Endothelial cell of umbilical vein (primary cell): ENCODE measurements at regions of chr4 and their contacts with region 1.

Region 1: GRCh38 chr4:128809477-128810330 is at the start of gene JADE1:
- DNase-seq: peak; percentile 95
- H3K4me3 ChIP-seq: peak within 1 kb of the TSS; percentile 77 to 98 (median 94)
- H3K27ac ChIP-seq: peak within 1 kb of the TSS; percentile 93
- H3K4me1 ChIP-seq: peaks cover 7% of the 10 kb centered on the region
- H3K27me3 ChIP-seq: no peaks in the 10 kb centered on the region
- CTCF ChIP-seq: peak; percentile 65 to 72
- POLR2A ChIP-seq: no peak
- total RNA-seq, gene JADE1: 39.2 and 45.6 TPM in 2 replicates

Region 2: DNA sequence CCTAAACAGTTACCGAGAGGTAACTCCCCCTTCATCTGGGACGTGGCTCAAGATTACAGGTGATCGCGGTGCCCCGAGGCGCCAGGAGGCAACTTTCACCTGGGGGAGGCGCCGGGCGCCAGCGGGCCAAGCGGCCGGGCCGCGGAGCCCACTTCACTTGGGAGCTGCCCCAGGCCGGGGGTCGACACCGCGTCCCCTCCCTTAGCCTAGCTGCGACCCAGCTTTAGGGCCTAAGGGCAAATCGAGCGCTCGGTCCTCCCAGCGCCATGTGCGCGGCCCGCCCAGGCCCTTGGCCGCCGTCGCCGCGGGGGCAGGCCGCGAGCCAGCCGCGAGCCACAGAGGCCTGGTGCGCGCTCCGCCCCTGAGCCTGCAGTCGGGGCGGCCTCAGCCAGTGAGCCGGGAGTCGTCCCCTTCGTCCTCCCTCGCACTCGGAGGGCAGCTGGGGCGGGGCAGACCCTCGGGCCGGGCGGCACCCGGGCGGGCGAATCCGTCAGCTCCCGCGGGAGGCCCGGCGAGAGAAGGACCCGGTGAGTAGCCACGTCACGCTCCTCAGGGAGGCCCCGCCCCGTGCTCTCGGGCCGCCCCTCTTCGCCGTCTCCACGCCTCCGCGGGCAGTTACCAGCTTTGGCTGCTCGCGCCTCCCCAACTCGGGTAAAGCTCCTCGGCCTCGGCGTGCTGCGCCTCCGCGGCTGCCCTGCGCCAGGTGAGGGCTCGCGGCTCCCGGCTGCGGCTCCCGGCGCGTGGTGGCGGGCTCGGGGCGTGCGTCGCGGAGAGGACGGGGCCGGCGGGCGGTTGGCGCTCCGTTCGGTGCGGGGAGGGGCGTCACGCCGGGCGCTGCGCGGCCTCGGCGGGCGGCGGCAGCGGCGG is 748.8 kb before region 1 on chr4 and contains the start of gene LARP1B:
- CTCF ChIA-PET with region 1: no interaction called
- POLR2A ChIA-PET with region 1: interaction called, 3 read pairs
- dilution Hi-C with region 1: no loop called
- intact Hi-C with region 1: loop called (anchors 5 kb)
- DNase-seq: peak; percentile 97
- H3K4me3 ChIP-seq: peak within 1 kb of the TSS; percentile 74 to 86 (median 86)
- H3K27ac ChIP-seq: peak within 1 kb of the TSS; percentile 87
- H3K4me1 ChIP-seq: peaks cover 10% of the 10 kb centered on the region
- H3K27me3 ChIP-seq: no peaks in the 10 kb centered on the region
- CTCF ChIP-seq: no peak
- POLR2A ChIP-seq: peak; percentile 94
- total RNA-seq, gene LARP1B: 27.7 and 28.8 TPM in 2 replicates

Region 3: DNA sequence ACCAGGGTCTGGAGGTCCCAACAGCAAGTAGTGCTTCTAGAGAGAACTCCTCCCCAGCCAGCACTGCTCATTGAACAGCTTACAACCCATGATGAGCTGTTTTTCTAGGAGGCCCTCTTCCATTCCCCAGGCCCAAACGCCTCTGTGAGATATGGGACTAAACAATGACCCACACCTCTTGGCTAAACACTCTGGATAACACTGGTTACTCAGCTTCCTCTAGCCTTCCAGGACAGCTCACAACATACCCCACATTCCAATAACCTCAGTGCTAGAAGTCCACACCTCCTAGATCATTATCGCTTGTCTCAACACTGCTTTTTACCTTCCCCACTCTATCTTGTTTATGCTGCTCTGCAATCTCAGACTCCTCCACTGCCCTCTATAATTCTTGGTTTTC is 486.7 kb before region 1 on chr4:
- CTCF ChIA-PET with region 1: no interaction called
- POLR2A ChIA-PET with region 1: no interaction called
- dilution Hi-C with region 1: no loop called
- intact Hi-C with region 1: loop called (anchors 1 kb)
- DNase-seq: peak; percentile 91
- H3K4me3 ChIP-seq: no peak overlapping the region
- H3K27ac ChIP-seq: peak overlapping the region; percentile 96
- H3K4me1 ChIP-seq: peaks cover 31% of the 10 kb centered on the region
- H3K27me3 ChIP-seq: no peaks in the 10 kb centered on the region
- CTCF ChIP-seq: no peak
- POLR2A ChIP-seq: peak; percentile 74

Region 4: GRCh38 chr4:128386761-128387599 is 422.7 kb before region 1 on chr4:
- CTCF ChIA-PET with region 1: interaction called, 4 read pairs
- POLR2A ChIA-PET with region 1: no interaction called
- dilution Hi-C with region 1: no loop called
- intact Hi-C with region 1: loop called (anchors 2 kb)
- DNase-seq: peak; percentile 94
- H3K4me3 ChIP-seq: no peak overlapping the region
- H3K27ac ChIP-seq: peak overlapping the region; percentile 34
- H3K4me1 ChIP-seq: peaks cover 15% of the 10 kb centered on the region
- H3K27me3 ChIP-seq: no peaks in the 10 kb centered on the region
- CTCF ChIP-seq: no peak
- POLR2A ChIP-seq: no peak

Region 5: GRCh38 chr4:128553686-128554515 is 255.8 kb before region 1 on chr4:
- CTCF ChIA-PET with region 1: interaction called, 8 read pairs
- POLR2A ChIA-PET with region 1: no interaction called
- dilution Hi-C with region 1: no loop called
- intact Hi-C with region 1: loop called (anchors 1 kb)
- DNase-seq: peak; percentile 68
- H3K4me3 ChIP-seq: peak overlapping the region in 2 of 3 experiments; percentile 21 to 60
- H3K27ac ChIP-seq: peak overlapping the region; percentile 86
- H3K4me1 ChIP-seq: peaks cover 22% of the 10 kb centered on the region
- H3K27me3 ChIP-seq: no peaks in the 10 kb centered on the region
- CTCF ChIP-seq: no peak
- POLR2A ChIP-seq: no peak

Region 6: DNA sequence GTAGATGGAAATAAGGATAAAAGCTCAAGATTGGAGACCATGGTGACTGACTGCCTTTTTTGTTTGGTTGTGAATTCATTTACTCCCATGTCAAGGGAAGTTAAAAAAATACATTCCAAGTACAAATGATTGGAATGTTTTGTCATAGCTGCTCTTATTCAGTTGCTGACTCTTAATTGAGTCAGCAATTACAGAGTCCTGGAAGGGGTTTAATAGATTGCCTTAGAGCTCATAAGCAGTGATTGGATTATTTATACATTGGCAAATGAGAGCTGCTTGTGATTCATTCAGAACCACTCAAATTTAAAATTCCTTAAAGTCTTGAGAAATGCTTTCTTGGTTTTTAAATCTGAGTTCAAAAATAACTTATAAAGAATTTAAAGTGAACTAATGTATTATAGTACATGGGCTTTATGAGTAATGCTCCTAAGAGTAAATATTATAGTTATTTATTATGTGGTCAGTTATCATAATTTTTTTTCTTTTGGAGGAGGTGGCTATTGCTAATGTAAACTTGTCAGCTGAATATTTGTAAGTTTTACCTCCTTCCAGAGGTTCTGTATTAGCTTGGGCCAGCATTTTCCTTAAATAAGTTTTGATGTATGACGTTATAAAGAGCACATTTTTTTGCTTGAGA is 13.4 kb after region 1 on chr4:
- CTCF ChIA-PET with region 1: interaction called, 16 read pairs
- POLR2A ChIA-PET with region 1: interaction called, 3 read pairs
- dilution Hi-C with region 1: no loop called
- intact Hi-C with region 1: loop called (anchors 1 kb)
- DNase-seq: peak; percentile 46
- H3K4me3 ChIP-seq: no peak overlapping the region
- H3K27ac ChIP-seq: no peak overlapping the region
- H3K4me1 ChIP-seq: peaks cover 9% of the 10 kb centered on the region
- H3K27me3 ChIP-seq: no peaks in the 10 kb centered on the region
- CTCF ChIP-seq: no peak
- POLR2A ChIP-seq: no peak